ENCODE measurements at regions of chr2 and their contacts with region 1.

Region 1: DNA sequence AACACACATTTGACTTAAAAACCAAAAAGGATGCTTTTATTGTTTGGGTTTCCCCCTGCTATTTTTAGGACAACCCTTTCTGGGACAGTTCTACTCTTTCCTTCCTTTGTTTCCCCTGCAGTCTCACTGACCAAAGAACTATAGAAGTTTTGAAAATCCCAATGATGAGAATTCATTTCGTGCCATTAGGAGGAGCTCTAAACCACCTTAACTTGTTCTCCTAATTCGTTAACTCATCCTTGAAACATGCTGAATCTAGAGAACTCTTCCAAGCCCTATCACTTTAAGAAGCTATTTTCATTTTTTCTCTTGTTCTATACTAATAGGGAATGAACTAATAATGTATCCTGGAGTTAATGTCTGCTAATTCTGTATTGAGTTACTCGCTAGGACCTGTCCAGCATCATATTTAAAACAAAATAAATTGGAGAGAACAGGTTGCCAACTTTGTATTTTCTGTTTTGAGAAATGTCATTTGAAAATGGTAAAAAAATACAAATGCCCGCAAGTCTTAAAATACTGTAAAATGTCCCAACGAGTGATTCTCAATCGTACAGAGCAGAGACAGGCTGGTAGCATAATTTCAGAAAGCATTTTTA is 62.9 kb downstream of the AFTPH start:
- DNase-seq: no peak
- ATAC-seq: peak; percentile 65
- H3K4me3 Mint-ChIP-seq: no peak overlapping the region
- H3K27ac Mint-ChIP-seq: no peak overlapping the region
- H3K4me1 Mint-ChIP-seq: peaks cover 15% of the 10 kb centered on the region
- H3K27me3 Mint-ChIP-seq: no peaks in the 10 kb centered on the region
- CTCF ChIP-seq: peak; percentile 69

Region 2: DNA sequence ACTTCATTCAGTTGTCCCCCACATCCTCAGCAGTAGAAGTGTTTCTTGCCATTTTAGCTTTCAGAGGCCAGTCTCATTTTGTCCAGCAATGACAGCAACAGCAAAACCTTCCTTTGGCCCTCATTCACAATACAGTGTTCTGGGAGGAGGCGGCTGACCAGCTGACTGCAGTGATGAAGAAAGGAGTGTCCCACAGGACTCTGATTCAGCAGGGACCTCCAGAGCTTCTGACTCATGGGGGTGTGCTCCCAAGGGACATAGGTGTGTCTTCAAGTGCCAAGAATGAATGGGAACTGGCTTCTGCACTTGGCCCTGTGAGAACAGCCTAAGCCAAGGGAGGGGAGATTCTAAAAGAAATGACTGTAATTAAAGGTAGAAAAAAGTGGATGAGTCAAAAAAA is 295.8 kb before region 1 on chr2:
- CTCF ChIA-PET with region 1: no interaction called
- POLR2A ChIA-PET with region 1: no interaction called
- intact Hi-C with region 1: no loop called
- DNase-seq: no peak
- ATAC-seq: no peak
- H3K4me3 Mint-ChIP-seq: no peak overlapping the region
- H3K27ac Mint-ChIP-seq: no peak overlapping the region
- H3K4me1 Mint-ChIP-seq: peaks cover 16% of the 10 kb centered on the region
- H3K27me3 Mint-ChIP-seq: no peaks in the 10 kb centered on the region
- CTCF ChIP-seq: no peak

Region 3: DNA sequence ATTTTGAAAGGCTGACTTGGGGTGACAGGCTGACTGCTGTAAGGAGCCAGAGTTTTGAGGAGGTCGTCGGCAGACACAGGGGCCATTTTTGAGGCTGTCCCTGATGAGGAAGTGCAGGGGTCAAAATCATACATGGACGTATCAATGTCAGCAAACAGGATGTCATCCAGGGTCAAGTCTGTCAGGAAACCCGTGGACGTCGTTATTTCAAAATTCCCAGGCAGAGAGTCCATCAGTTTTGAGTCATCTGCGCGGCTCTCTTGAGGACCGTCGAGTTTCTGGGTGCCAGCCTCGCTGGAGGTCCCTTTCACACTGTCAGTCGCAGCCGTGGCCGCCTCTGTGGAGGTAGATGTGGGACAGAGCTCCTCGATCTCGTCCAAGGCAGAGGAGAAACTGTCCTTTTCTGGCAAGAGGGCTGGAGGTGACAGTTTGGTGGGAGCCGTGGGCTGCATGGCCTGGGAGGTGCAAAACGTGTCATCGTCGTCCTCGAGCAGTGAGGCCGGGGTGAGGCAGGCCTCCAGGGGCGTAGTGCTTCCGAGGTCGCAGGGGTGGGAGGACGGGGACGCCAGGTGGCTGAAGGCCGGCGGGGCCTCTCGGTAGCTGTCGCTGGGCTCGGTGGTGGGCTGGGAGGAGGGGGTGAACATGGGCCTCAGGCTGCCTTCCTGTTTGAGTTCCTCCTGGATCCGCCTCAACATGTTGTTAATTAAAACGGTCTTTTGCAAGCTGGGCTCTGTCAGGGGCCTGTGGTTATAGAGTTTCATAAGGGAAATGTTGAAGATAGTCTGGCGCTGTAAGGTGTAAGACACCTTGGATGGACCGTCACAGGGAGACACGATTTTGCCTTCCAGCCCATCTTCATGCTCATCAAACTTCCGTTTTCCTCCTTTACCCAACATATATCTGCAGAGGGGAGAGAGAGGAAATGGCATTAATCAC is 49.3 kb after region 1 on chr2:
- CTCF ChIA-PET with region 1: interaction called, 13 read pairs
- POLR2A ChIA-PET with region 1: no interaction called
- intact Hi-C with region 1: no loop called
- DNase-seq: peak; percentile 40
- ATAC-seq: peak; percentile 67
- H3K4me3 Mint-ChIP-seq: peak overlapping the region; percentile 60
- H3K27ac Mint-ChIP-seq: peak overlapping the region; percentile 86
- H3K4me1 Mint-ChIP-seq: peaks cover 58% of the 10 kb centered on the region
- H3K27me3 Mint-ChIP-seq: no peaks in the 10 kb centered on the region
- CTCF ChIP-seq: no peak

Region 4: GRCh38 chr2:64865073-64865830 is 278.3 kb after region 1 on chr2:
- CTCF ChIA-PET with region 1: interaction called, 15 read pairs
- POLR2A ChIA-PET with region 1: interaction called, 3 read pairs
- intact Hi-C with region 1: loop called (anchors 2 kb)
- DNase-seq: peak; percentile 72
- ATAC-seq: peak; percentile 68
- H3K4me3 Mint-ChIP-seq: peak overlapping the region; percentile 68
- H3K27ac Mint-ChIP-seq: peak overlapping the region; percentile 35
- H3K4me1 Mint-ChIP-seq: peaks cover 3% of the 10 kb centered on the region
- H3K27me3 Mint-ChIP-seq: peaks cover 6% of the 10 kb centered on the region
- CTCF ChIP-seq: peak; percentile 94

Region 5: DNA sequence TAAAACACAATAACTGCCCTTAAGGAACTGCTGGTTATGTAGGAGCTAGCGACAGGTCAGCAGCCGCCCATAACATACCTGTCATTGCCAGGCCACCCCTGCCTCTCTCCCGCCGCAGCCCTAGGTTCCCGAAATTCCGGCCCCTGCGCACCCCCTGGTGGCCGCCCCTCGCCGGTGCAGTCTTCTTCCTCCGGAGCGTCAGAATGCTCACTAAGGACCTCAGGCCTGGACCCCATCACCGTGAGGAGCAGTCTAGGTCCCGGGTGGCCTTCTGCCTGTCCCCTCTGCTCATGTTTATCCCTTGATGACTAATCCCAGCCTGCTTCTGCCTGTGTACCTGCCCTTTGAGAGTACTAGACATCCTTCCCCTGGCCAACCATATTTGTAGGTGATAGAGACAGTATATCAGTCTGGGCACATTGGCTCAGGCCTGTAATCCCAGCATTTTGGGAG is 286.5 kb after region 1 on chr2:
- CTCF ChIA-PET with region 1: interaction called, 15 read pairs
- POLR2A ChIA-PET with region 1: no interaction called
- intact Hi-C with region 1: no loop called
- DNase-seq: peak; percentile 87
- ATAC-seq: peak; percentile 92
- H3K4me3 Mint-ChIP-seq: peak overlapping the region; percentile 36
- H3K27ac Mint-ChIP-seq: no peak overlapping the region
- H3K4me1 Mint-ChIP-seq: peaks cover 6% of the 10 kb centered on the region
- H3K27me3 Mint-ChIP-seq: peaks cover 1% of the 10 kb centered on the region
- CTCF ChIP-seq: peak; percentile 89